PC-3 (cell line): ENCODE measurements at regions of chr1 and their contacts with region 1.

Region 1: DNA sequence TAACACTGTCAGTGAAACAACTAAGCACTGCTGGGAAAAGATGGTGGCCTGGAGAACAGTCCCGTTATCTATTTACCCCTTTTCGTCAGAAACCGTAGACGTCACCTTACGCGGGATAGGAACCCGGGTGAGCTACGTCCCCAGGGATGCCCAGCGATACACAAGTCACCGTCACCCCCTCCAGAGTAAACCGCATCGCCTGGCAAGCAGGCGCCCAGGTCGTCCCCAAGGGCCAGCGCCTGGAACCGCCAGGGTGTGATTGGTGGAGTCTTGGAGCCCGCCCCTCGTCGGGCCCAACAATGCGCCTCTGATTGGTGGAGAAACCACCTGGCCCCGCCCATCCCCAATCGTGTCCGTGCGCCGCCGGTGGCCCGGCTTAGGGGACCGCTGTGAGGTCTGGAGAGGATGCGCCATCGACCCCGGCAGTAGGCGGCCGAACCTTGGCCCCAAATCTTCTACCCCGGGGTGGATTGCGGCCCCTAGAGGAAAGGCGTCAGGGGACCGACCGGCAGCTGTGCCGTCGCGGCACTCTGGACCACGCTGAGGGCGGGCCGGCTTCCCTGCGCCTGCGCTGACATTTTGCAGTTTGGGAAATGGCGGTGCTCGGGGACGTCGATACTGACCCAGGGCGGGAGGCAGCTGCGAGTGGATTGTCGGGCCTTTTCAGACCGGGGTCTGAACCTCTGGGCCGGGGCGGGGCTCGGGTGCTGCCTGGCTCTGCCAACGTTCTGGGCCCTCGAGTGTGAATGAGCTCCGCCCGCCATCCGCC is 34.4 kb downstream of the SLC2A1 start:
- DNase-seq: peak; percentile 92
- ATAC-seq: peak; percentile 87
- H3K4me3 ChIP-seq: peak overlapping the region; percentile 79
- H3K27ac ChIP-seq: peak overlapping the region; percentile 72
- H3K4me1 ChIP-seq: peaks cover 25% of the 10 kb centered on the region
- H3K27me3 ChIP-seq: no peaks in the 10 kb centered on the region
- CTCF ChIP-seq: no peak; the same call in 1 of the 2 replicates

Region 2: DNA sequence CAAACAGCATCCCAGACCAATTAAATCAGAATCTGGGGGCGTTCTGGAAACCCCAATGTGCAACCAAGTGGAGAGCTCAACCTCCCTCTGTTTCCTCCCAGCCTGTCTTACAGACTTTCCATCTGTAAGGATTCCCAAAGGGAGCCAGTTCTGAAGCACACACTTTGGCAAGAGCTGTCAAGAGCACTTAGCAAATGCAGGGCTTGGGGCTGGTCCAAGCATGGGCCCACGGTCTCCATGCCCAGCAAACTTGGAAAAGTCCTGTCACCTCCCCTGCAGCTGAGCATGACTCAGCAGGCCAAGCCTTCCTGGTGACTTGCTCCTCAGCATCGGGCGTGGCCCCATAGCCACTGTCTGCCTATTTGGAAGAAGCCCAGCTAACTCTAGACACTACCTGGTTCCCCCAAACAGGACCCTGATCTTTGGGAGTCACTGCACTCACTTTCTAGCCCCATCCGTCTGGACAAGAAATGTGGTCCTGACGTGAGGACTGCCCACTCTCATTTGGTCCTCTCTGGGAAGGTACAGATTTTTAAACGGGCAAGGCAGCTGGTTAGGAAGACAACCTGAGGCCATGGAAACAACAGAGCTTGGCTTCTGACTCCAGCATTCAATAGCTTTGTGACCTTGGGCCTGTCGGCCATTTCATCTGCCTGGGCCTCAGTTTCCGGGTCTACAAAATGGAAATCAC is 17.5 kb after region 1 on chr1:
- CTCF ChIA-PET with region 1: interaction called, 17 read pairs
- POLR2A ChIA-PET with region 1: no interaction called
- intact Hi-C with region 1: loop called (anchors 2 kb)
- DNase-seq: peak; percentile 97
- ATAC-seq: peak; percentile 36
- H3K4me3 ChIP-seq: peak overlapping the region; percentile 13; the same call in 1 of the 2 replicates
- H3K27ac ChIP-seq: peak overlapping the region; percentile 99
- H3K4me1 ChIP-seq: peaks cover 100% of the 10 kb centered on the region
- H3K27me3 ChIP-seq: no peaks in the 10 kb centered on the region
- CTCF ChIP-seq: no peak